Heart right ventricle (tissue), 16 donors: ENCODE measurements at regions of chrX and their contacts with region 1.

Region 1: GRCh38 chrX:40735325-40736169 is at the start of gene MED14:
- DNase-seq: peak; percentile 84 to 87
- ATAC-seq: peak; percentile 96 to 99 (median 99)
- H3K4me3 ChIP-seq: peak within 1 kb of the TSS; percentile 65 to 88 (median 74)
- H3K27ac ChIP-seq: peak within 1 kb of the TSS; percentile 91 to 99 (median 96)
- H3K4me1 ChIP-seq: peaks cover 0 to 39% (median 22%) of the 10 kb centered on the region in 9 donors
- H3K27me3 ChIP-seq: peaks cover 0 to 85% (median 0%) of the 10 kb centered on the region in 7 donors
- CTCF ChIP-seq: peak in 8 of 9 donors; percentile 31 to 62 (median 50)
- total RNA-seq, gene MED14: 23.9 to 44.9 (median 36.1) TPM

Region 2: GRCh38 chrX:40755291-40756249 is 20.0 kb after region 1 on chrX:
- intact Hi-C with region 1: loop called in 1 of 10 experiments (anchors 2 kb)
- DNase-seq: peak; percentile 40 to 55
- ATAC-seq: peak; percentile 82 to 93 (median 88)
- H3K4me3 ChIP-seq: no peak overlapping the region
- H3K27ac ChIP-seq: peak overlapping the region; percentile 8 to 78 (median 73)
- H3K4me1 ChIP-seq: peaks cover 0 to 16% (median 8%) of the 10 kb centered on the region in 9 donors
- H3K27me3 ChIP-seq: peaks cover 0 to 95% (median 0%) of the 10 kb centered on the region in 7 donors
- CTCF ChIP-seq: no peak

Region 3: DNA sequence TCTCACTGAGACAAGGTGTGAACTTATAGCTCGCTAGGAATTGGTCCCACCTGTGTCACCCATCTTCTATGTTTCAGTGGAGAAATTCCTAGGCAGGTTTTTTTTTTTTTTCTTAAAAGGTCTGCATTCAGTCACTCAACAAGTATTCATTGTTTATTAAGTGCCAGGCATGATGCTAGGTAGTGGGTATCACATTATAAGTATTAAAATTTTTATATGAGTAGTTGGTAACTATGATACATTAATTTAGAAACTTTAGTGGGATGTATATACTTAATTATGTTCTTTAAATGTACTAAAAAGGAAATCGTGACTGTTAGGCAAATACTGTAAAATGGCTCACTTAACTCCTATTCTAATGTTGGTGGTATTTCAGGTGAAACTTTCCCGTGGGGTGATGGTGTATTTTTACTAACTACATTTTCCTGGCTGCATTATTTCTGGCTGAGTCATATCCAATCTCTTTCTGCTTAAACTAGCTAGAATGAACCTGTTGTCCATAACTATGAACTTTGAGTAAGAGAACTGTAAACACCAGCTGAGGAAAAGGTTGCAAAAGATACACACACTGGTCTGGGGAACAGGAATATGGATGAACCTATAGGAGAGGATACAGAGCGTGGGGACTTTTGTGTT is 49.1 kb after region 1 on chrX:
- intact Hi-C with region 1: loop called in 1 of 10 experiments (anchors 10 kb)
- DNase-seq: no peak
- ATAC-seq: no peak
- H3K4me3 ChIP-seq: no peak overlapping the region
- H3K27ac ChIP-seq: no peak overlapping the region
- H3K4me1 ChIP-seq: no peaks in the 10 kb centered on the region
- H3K27me3 ChIP-seq: peaks cover 0 to 75% (median 0%) of the 10 kb centered on the region in 7 donors
- CTCF ChIP-seq: no peak